Ovary (tissue), 10 donors: ENCODE measurements at regions of chr15 and their contacts with region 1.

Region 1: DNA sequence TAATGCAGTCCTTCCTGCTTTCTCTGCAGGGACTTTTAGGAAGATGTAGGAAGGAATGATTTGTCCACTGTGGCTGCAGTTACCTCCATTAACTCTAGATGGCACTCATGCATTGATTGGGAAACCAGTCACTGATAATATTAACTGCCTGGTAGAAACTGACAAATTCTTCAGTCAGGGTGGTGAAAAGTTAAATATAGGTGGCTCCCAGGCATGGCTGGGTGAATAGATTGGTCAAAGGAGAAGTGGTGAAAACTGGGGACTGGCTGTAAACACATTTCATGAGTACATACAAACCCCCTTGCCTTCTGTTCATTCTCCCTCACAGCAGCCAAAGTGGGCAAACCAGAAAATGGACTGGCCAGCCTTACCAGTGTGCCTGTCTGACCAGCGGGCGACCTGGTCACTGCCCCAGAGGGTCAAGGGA is 333.4 kb downstream of the THSD4 start:
- DNase-seq: peak in 2 of 5 donors; percentile 16 to 48
- H3K4me3 ChIP-seq: no peak overlapping the region
- H3K27ac ChIP-seq: no peak overlapping the region
- H3K4me1 ChIP-seq: no peaks in the 10 kb centered on the region
- H3K27me3 ChIP-seq: no peaks in the 10 kb centered on the region
- CTCF ChIP-seq: peak; percentile 27 to 83 (median 68)
- EP300 ChIP-seq: no peak
- POLR2A ChIP-seq: no peak

Region 2: GRCh38 chr15:71114896-71115554 is 333.7 kb before region 1 on chr15 and contains the start of gene THSD4:
- intact Hi-C with region 1: loop called in 1 of 4 experiments (anchors 10 kb)
- DNase-seq: peak; percentile 56 to 84 (median 67)
- H3K4me3 ChIP-seq: peak within 1 kb of the TSS; percentile 51
- H3K27ac ChIP-seq: no peak within 1 kb of the TSS
- H3K4me1 ChIP-seq: no peaks in the 10 kb centered on the region
- H3K27me3 ChIP-seq: no peaks in the 10 kb centered on the region
- CTCF ChIP-seq: peak; percentile 42 to 92 (median 86)
- EP300 ChIP-seq: no peak
- POLR2A ChIP-seq: no peak
- total RNA-seq, gene THSD4: 3.2 to 53.4 (median 13.5) TPM

Region 3: GRCh38 chr15:71651750-71652186 is 203.1 kb after region 1 on chr15:
- intact Hi-C with region 1: loop called in 1 of 4 experiments (anchors 5 kb)
- DNase-seq: no peak
- H3K4me3 ChIP-seq: no peak overlapping the region
- H3K27ac ChIP-seq: no peak overlapping the region
- H3K4me1 ChIP-seq: no peaks in the 10 kb centered on the region
- H3K27me3 ChIP-seq: no peaks in the 10 kb centered on the region
- CTCF ChIP-seq: peak in 1 of 3 donors; percentile 20
- EP300 ChIP-seq: no peak
- POLR2A ChIP-seq: no peak

Region 4: DNA sequence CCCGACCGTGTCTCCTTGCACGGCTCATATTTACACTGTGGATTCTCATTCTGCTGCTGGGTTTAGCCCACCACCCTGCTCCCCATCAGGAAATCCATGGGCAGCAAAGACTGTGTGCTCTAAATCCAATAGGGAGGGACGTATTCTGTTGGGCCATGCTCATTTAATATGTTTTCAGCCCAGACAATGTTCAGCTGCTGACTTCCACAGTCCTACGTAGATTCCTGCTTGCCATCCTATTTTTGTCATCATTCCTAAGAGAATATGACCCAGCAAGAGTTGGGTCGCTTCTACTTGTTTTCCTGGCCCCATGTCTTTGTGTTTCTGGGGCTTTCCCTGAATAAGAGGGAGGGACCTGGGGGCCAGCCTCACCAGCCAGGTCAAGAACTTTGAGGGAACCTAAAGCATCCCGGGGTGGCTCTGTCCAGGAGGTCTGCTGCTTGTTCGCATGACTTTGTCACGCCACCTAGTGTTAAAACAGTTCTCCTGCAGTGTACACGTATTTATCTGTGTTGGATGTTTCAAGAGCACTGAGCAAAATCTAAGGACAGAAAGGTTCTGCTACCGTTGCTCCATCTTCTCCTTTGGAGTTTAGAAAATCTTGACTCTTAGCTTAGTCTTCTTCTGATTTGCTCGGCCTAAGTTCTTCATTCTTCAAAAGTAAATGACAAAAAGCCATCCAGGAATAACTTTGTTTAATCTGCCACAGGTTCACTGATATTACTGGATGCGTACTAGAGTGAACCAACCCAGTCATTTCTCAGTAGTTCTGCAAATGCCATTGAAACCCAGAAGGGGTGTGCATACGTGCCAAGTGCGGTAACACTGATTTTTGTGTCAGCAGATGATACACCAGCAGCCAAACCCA is 281.8 kb after region 1 on chr15:
- intact Hi-C with region 1: loop called in 3 of 4 experiments (anchors 5 to 10 kb)
- DNase-seq: peak in 1 of 5 donors; percentile 42
- H3K4me3 ChIP-seq: no peak overlapping the region
- H3K27ac ChIP-seq: no peak overlapping the region
- H3K4me1 ChIP-seq: no peaks in the 10 kb centered on the region
- H3K27me3 ChIP-seq: no peaks in the 10 kb centered on the region
- CTCF ChIP-seq: peak in 2 of 3 donors; percentile 24 to 57
- EP300 ChIP-seq: no peak
- POLR2A ChIP-seq: no peak